Activated CD8-positive, alpha-beta T cell treated with anti-CD3 and anti-CD28 coated beads for 36 hours (primary cell): ENCODE measurements at regions of chr18 and their contacts with region 1.

Region 1: GRCh38 chr18:75143851-75144250 is 65.1 kb downstream of the PTGR3 start:
- DNase-seq: no peak
- ATAC-seq: no peak
- H3K4me3 Mint-ChIP-seq: no peak overlapping the region
- H3K27ac Mint-ChIP-seq: no peak overlapping the region
- H3K4me1 Mint-ChIP-seq: no peaks in the 10 kb centered on the region
- H3K27me3 Mint-ChIP-seq: no peaks in the 10 kb centered on the region
- CTCF ChIP-seq: no peak

Region 2: DNA sequence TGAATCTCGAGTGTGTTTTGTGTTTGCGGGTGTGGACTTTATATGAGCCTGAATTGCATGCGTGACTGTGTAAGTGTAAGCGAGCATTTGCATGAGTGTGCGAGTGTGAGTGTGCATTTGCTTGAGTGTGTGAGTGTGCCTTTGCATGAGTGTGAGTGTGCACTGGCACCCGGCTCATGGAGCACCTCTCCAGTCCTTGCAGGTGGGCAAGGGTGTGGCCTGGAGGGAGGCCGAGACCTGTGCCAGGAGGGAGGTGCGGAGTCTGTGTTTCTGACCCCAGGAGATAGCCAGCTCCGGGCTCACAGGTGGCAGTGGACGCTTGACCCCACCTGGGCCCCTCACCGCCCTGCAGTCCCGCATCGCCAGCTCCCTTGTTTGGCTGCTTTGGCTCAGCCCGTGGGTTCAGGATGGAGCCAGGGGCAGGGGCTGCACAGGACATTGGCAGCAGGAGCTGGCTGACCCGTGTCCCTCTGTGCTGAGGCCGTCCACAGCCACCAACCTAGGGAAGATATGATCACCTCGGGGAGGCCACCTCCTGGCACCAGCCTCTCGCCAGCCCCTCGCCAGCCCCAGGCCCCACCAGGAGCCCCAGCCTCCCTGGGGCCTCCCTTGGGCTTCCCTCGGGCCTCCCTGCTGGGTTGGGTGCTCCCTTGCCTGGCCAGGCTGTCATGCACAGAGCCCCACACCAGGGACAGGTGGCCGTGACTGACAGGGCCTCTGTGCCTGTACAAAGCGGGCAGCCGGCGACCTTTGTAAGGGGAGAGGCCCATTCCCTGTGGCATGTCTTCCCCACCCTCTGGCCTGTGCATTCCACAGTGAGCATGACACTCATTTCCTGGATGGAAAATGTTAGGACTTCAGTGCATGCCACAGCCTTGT is 16.5 kb before region 1 on chr18:
- CTCF ChIA-PET with region 1: no interaction called
- POLR2A ChIA-PET with region 1: no interaction called
- intact Hi-C with region 1: loop called (anchors 2 kb)
- DNase-seq: no peak
- ATAC-seq: no peak
- H3K4me3 Mint-ChIP-seq: no peak overlapping the region
- H3K27ac Mint-ChIP-seq: no peak overlapping the region
- H3K4me1 Mint-ChIP-seq: peaks cover 4% of the 10 kb centered on the region
- H3K27me3 Mint-ChIP-seq: peaks cover 5% of the 10 kb centered on the region
- CTCF ChIP-seq: no peak